ENCODE measurements at regions of chr4 and their contacts with region 1.

Region 1: GRCh38 chr4:99816545-99817308 is at the start of gene DAPP1:
- DNase-seq: peak; percentile 79
- H3K4me3 Mint-ChIP-seq: peak within 1 kb of the TSS; percentile 92
- H3K27ac Mint-ChIP-seq: peak within 1 kb of the TSS; percentile 77
- H3K4me1 Mint-ChIP-seq: peaks cover 76% of the 10 kb centered on the region
- H3K27me3 Mint-ChIP-seq: no peaks in the 10 kb centered on the region
- total RNA-seq, gene DAPP1: 38.8 and 40.2 TPM in 2 replicates

Region 2: DNA sequence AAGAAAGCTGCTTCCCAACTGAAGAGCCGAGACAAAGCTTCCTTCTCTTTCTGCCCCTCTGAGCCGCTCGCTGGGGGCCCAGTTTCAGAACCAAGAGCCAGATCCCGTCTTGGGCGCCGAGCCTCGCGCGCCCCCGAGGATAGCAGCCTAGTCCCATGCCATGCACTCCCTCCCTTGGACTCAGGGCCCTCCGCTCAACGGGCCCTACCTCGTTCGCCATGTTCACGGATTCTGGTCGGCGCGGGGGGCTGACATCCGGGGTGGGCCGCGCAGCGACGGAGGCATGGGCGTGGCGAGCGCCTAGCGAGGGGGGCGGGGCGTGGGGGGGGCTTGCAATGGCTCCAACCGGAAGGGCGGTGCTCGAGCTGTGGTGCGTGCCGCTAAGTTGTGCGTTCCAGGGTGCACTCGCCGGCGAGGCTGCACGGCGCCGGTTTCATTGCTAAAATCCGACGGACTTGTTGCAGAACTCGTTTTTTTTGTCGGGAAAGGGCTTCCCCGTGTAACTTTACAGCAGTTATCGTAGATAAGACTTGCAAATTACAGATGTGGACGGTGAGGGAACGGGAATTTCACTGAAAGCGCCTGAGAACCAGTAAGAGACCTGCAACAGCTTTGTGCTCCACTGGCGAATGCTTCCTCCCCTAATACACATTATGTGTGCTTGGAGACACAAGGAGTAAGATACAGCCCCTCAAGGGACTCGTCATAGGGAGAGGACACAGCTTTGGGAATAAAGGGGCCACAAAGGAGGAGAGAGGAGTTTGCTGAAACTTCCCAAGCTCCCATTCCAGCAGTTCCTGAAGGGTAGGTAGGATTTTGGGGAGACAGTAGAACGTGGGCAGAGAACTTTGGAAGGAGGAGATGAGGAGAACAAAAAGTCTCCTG is 728.0 kb before region 1 on chr4 and contains the start of gene ADH5:
- intact Hi-C with region 1: loop called (anchors 2 kb)
- DNase-seq: peak; percentile 77
- H3K4me3 Mint-ChIP-seq: peak within 1 kb of the TSS; percentile 98
- H3K27ac Mint-ChIP-seq: peak within 1 kb of the TSS; percentile 98
- H3K4me1 Mint-ChIP-seq: peaks cover 50% of the 10 kb centered on the region
- H3K27me3 Mint-ChIP-seq: peaks cover 2% of the 10 kb centered on the region
- total RNA-seq, gene ADH5: 68.8 and 74.9 TPM in 2 replicates

Region 3: GRCh38 chr4:99330648-99331047 is 486.1 kb before region 1 on chr4:
- intact Hi-C with region 1: no loop called
- DNase-seq: no peak
- H3K4me3 Mint-ChIP-seq: no peak overlapping the region
- H3K27ac Mint-ChIP-seq: no peak overlapping the region
- H3K4me1 Mint-ChIP-seq: no peaks in the 10 kb centered on the region
- H3K27me3 Mint-ChIP-seq: no peaks in the 10 kb centered on the region

Region 4: GRCh38 chr4:99383833-99384392 is 432.8 kb before region 1 on chr4:
- intact Hi-C with region 1: no loop called
- DNase-seq: no peak
- H3K4me3 Mint-ChIP-seq: no peak overlapping the region
- H3K27ac Mint-ChIP-seq: no peak overlapping the region
- H3K4me1 Mint-ChIP-seq: no peaks in the 10 kb centered on the region
- H3K27me3 Mint-ChIP-seq: peaks cover 5% of the 10 kb centered on the region

Region 5: DNA sequence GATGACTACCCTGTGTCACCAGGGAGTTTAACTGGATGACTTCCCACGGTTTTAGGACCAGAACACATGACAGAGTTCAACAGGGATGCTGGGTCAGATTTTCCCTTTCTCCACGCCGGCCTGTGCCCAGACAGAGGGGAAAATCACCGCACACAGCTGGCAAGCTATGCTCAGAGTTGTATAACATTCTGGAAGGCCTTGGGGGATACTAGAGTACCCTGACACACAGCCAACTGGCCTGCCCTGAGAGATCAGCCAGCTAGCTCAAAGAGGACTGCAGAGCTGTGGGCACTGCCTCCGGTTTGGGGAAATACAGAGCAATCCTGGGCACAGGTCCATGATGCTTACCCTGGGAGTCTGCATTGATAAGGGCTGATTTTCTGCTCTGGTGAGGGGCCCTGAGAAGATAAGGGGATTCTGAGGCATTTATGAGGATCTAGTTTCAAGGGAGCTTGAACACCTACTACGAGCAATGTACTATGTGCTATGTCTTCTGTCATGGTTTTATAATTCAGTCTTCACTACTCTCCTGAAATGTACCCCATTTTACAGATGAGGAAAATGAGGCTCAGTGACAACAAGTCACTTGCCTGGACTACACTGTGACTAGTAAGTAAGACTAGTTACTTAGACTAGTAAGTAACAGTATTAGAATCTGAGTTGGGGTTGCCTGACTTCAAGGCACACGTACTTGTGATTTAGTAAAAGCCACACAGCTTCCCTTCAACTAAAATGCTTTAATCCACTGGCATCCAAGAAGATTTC is 173.8 kb before region 1 on chr4:
- intact Hi-C with region 1: no loop called
- DNase-seq: no peak
- H3K4me3 Mint-ChIP-seq: no peak overlapping the region
- H3K27ac Mint-ChIP-seq: no peak overlapping the region
- H3K4me1 Mint-ChIP-seq: no peaks in the 10 kb centered on the region
- H3K27me3 Mint-ChIP-seq: peaks cover 3% of the 10 kb centered on the region

Region 6: GRCh38 chr4:99827857-99828256 is 11.1 kb after region 1 on chr4:
- intact Hi-C with region 1: loop called (anchors 1 kb)
- DNase-seq: no peak
- H3K4me3 Mint-ChIP-seq: no peak overlapping the region
- H3K27ac Mint-ChIP-seq: peak overlapping the region; percentile 45
- H3K4me1 Mint-ChIP-seq: peaks cover 57% of the 10 kb centered on the region
- H3K27me3 Mint-ChIP-seq: no peaks in the 10 kb centered on the region

Region 7: GRCh38 chr4:99847362-99847976 is 30.7 kb after region 1 on chr4:
- intact Hi-C with region 1: loop called (anchors 1 kb)
- DNase-seq: no peak
- H3K4me3 Mint-ChIP-seq: peak overlapping the region; percentile 59
- H3K27ac Mint-ChIP-seq: peak overlapping the region; percentile 95
- H3K4me1 Mint-ChIP-seq: peaks cover 83% of the 10 kb centered on the region
- H3K27me3 Mint-ChIP-seq: no peaks in the 10 kb centered on the region

Region 8: GRCh38 chr4:99855678-99856077 is 39.0 kb after region 1 on chr4:
- intact Hi-C with region 1: loop called (anchors 1 kb)
- DNase-seq: no peak
- H3K4me3 Mint-ChIP-seq: peak overlapping the region; percentile 59
- H3K27ac Mint-ChIP-seq: peak overlapping the region; percentile 71
- H3K4me1 Mint-ChIP-seq: peaks cover 86% of the 10 kb centered on the region
- H3K27me3 Mint-ChIP-seq: no peaks in the 10 kb centered on the region

Region 9: DNA sequence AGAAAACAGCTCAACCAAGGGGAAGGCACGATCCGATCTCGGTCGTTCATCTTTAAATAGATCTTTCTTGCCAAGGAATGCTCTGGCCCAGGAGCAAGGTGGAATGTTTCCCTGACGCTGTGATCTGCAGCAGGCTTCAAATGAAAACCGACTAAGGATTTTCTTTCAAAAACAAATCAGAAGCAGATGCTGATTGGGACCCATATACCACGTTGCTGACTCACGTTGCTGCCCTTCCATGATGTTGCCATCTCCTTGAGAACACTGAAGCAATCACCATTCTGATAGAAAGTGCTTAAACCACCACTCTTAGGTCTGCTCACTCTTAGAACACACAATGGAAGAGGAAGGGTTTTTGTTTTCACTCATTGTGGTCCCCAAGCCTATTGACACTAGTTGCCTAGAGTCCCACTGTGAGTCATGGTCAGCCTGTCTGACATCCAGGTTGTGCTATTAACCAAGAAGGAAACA is 51.4 kb after region 1 on chr4:
- intact Hi-C with region 1: loop called (anchors 1 kb)
- DNase-seq: no peak
- H3K4me3 Mint-ChIP-seq: no peak overlapping the region
- H3K27ac Mint-ChIP-seq: no peak overlapping the region
- H3K4me1 Mint-ChIP-seq: peaks cover 15% of the 10 kb centered on the region
- H3K27me3 Mint-ChIP-seq: no peaks in the 10 kb centered on the region

Region 10: DNA sequence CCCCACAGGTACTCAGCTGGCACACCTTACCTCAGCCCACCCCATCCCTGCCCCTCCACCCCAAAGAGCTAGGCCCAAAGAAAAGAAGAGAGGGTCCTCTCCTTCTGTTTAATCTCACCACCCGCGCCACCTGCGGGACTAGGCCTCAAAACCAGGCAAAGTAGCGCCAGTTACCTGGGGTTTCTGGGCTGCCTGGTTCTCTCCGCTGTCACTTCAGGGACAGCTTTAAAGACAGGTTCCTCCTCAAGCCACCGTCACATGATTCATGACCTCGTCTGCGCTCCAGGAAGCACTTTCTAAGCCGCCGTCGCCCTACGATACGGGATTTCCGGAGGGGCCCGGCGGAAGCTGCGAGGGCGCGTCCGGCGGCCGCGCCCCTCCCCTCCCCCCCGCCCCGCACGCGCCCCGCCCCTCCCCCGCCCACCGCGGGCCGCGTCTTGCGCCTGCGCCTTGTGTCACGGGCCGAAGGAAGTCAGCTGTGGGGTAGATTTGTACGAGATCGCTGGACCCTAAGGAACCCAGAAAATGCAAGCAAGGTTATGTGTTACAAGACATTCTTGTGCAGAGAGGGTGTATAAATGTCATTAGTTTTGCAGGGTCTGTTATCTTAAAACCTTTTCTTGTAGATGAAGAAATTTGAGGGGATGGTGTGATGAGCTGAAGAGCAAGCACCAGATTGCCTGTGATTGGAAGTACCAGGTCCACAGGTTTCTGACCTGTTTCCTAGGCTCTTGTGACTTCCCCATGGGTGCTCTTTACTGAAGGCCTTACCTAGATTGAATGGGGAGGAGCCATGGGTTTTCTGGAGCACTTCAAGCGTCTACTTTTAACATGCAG is 77.7 kb after region 1 on chr4 and contains the start of gene LAMTOR3:
- intact Hi-C with region 1: loop called (anchors 1 kb)
- DNase-seq: peak; percentile 87
- H3K4me3 Mint-ChIP-seq: peak within 1 kb of the TSS; percentile 97
- H3K27ac Mint-ChIP-seq: peak within 1 kb of the TSS; percentile 95
- H3K4me1 Mint-ChIP-seq: peaks cover 42% of the 10 kb centered on the region
- H3K27me3 Mint-ChIP-seq: no peaks in the 10 kb centered on the region
- total RNA-seq, gene LAMTOR3: 28.6 and 29.7 TPM in 2 replicates

Region 11: DNA sequence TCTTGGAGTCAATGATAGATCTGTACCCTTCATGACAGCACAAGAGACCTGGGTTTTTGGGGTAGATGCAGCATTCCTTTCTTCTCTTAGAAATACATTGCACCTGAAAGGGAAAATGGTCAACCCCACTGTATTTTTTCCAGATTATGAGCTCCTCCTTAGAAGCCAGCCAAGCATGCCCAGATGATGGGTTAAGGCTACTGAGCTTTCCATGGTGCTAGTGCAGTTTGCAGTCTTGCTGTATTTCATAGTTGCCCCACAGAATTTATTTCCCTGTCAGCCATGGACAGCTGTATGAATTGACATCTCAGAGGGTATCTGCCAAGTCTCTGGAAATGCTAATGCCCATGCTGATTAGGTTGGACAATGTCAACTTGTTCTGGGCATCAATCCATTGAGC is 207.1 kb after region 1 on chr4:
- intact Hi-C with region 1: no loop called
- DNase-seq: no peak
- H3K4me3 Mint-ChIP-seq: no peak overlapping the region
- H3K27ac Mint-ChIP-seq: no peak overlapping the region
- H3K4me1 Mint-ChIP-seq: no peaks in the 10 kb centered on the region
- H3K27me3 Mint-ChIP-seq: no peaks in the 10 kb centered on the region